PC-9 (cell line): ENCODE measurements at regions of chr6 and their contacts with region 1.

Region 1: DNA sequence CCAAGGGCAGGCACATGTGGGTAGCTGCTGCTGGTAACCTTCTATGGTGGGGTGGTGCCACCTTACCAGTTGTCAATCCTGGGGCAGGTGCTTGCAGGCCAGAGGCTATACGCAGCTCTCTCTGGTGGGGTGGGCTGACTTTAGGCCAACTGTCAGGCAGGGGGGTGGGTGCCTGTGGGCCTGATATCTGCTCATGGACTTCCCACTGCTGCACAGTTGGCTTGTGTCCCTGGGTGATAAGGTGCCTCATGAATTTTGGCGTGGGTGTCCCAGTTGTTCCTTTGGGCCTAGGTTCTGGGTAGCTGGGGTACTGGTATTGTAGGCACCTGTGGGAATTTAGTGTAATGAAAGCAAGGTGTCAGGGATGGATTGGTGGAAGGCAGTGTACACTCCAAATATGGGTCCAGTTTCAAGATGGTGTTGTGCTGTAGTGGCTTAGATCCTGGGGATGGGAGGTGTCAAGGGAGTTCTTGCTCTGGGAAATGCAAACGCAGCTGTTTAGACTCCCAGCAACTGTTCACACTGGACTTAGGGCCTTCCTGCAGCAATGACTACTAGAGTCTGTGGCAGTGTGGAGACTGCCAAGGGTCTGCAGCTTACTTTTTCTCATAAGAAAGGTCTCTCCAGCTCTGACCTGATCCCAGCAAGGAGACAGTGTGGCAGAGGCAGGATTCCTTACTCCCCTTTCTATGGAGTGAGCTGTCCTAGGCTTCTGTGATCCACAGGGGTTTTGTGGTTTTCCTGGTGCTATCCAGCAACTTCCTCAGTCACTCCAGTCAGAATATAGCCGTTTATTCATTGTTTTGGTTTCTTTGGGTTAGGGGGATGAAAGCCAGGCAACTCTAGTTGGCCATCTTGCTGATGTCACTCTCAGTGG is 128.2 kb downstream of the CRYBG1 start:
- DNase-seq: no peak
- H3K4me3 ChIP-seq: no peak overlapping the region
- H3K27ac ChIP-seq: peak overlapping the region; percentile 27; the same call in 1 of the 2 replicates
- H3K4me1 ChIP-seq: peaks cover 32% of the 10 kb centered on the region
- H3K27me3 ChIP-seq: no peaks in the 10 kb centered on the region
- CTCF ChIP-seq: no peak

Region 2: DNA sequence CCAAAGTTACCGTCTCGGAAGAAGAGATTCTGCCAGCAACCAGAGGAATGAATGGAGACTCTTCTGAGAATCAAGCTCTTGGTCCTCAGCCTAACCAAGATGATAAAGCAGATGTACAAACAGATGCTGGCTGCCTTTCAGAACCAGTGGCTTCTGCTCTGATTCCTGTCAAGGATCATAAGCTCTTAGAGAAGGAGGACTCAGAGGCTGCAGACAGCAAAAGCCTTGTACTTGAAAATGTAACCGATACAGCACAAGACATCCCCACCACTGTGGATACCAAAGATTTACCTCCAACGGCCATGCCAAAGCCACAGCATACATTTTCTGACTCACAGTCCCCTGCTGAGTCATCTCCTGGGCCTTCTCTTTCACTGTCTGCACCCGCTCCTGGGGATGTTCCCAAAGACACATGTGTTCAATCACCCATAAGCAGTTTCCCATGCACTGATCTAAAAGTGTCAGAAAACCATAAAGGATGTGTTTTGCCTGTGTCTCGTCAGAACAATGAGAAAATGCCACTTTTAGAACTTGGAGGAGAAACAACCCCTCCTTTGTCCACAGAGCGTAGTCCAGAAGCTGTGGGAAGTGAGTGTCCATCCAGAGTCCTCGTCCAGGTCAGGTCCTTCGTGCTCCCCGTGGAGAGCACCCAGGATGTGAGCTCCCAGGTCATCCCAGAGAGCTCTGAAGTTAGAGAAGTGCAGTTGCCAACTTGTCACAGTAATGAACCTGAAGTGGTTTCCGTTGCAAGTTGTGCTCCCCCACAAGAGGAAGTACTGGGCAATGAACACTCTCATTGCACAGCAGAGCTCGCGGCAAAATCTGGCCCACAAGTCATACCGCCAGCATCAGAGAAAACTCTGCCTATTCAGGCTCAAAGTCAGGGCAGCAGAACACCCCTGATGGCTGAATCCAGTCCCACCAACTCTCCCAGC is 31.0 kb after region 1 on chr6:
- CTCF ChIA-PET with region 1: no interaction called
- POLR2A ChIA-PET with region 1: no interaction called
- intact Hi-C with region 1: no loop called
- DNase-seq: peak; percentile 56 to 67
- H3K4me3 ChIP-seq: no peak overlapping the region
- H3K27ac ChIP-seq: peak overlapping the region; percentile 57
- H3K4me1 ChIP-seq: peaks cover 31% of the 10 kb centered on the region
- H3K27me3 ChIP-seq: no peaks in the 10 kb centered on the region
- CTCF ChIP-seq: no peak

Region 3: GRCh38 chr6:106533079-106533478 is 44.3 kb after region 1 on chr6:
- CTCF ChIA-PET with region 1: no interaction called
- POLR2A ChIA-PET with region 1: interaction called, 10 read pairs
- intact Hi-C with region 1: no loop called
- DNase-seq: no peak
- H3K4me3 ChIP-seq: no peak overlapping the region
- H3K27ac ChIP-seq: no peak overlapping the region
- H3K4me1 ChIP-seq: peaks cover 24% of the 10 kb centered on the region
- H3K27me3 ChIP-seq: no peaks in the 10 kb centered on the region
- CTCF ChIP-seq: no peak